Activated CD8-positive, alpha-beta T cell treated with anti-CD3 and anti-CD28 coated beads for 36 hours (primary cell): ENCODE measurements at regions of chr12 and their contacts with region 1.

Region 1: DNA sequence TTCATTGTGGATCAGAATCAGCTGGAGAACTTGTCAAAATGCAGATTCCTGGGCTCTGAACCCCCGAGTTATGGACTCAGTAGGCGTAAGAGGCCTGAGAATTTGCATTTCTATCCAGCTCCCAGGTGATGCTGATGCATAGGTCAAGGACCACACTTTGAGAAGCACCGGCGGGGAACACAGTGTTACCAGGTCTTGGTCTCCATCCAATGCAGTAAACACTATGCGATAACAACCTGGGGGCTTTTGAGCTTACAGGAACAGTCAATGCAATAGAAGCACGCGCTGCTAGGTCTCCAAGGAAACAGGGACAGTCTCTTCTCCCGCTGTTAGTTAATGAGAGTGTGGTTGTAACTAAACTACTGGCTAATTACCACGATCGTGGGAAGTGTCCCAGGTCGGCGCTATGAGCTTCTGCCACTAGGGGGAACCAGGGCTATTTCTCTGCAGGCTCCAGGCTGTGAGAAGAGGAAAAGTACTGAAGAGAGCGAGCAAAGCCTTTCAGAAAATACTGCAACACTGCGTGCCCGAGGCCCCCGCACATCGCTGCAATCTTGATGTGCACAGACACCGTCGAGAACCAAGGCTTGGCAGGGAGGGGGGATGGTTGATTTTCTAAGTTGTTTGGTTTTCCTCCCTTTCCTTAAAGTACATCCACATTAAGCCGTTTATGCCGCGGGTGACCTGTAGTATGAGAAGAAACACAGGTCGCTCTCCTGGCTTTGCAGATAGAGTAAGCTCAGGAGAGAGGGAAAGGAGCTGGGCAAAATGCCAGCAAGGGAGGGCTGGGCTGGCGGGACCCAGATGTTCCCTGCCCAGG is 52.0 kb upstream of the KCNA1 start:
- DNase-seq: peak; percentile 87
- ATAC-seq: peak; percentile 91
- H3K4me3 Mint-ChIP-seq: peak overlapping the region; percentile 28
- H3K27ac Mint-ChIP-seq: no peak overlapping the region
- H3K4me1 Mint-ChIP-seq: peaks cover 9% of the 10 kb centered on the region
- H3K27me3 Mint-ChIP-seq: peaks cover 11% of the 10 kb centered on the region
- CTCF ChIP-seq: peak; percentile 94

Region 2: GRCh38 chr12:4833524-4833923 is 24.2 kb before region 1 on chr12:
- CTCF ChIA-PET with region 1: interaction called, 33 read pairs
- POLR2A ChIA-PET with region 1: no interaction called
- intact Hi-C with region 1: no loop called
- DNase-seq: no peak
- ATAC-seq: no peak
- H3K4me3 Mint-ChIP-seq: no peak overlapping the region
- H3K27ac Mint-ChIP-seq: no peak overlapping the region
- H3K4me1 Mint-ChIP-seq: peaks cover 34% of the 10 kb centered on the region
- H3K27me3 Mint-ChIP-seq: peaks cover 4% of the 10 kb centered on the region
- CTCF ChIP-seq: no peak

Region 3: DNA sequence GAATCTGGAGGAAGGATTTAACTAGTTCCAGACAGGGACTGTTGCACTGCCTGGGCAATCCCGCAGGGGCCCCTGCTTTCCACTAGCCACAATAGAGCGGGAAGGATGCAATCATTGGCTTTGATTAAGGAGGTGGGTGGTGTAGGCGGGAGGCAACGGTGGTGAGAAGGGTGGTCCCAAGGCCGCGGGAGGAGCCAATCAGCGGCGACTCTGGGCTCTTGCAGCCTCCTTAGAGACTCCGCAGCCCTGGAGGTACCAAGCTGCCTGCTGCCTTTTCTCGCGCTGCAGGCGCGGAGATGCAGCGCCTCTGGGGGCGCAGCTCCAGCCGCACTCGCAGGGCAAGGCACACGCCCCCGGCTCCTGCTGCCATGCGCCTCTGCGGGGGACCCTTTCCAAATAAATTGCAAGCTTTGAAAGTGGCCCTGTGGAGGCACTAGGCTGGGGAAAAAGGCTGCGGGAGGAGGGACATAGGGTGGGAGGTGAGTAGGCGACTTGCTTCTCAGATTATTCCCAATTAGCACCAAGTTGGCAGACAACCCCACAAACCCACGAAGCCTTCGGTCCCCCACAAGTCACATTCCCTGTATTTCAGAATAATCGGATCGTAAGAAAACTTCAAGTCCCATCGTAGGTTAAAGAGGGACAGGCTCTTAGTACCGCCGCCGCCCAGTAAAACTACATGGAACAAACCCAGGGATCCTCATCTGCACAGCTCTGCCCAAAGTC is 51.2 kb after region 1 on chr12:
- CTCF ChIA-PET with region 1: interaction called, 40 read pairs
- POLR2A ChIA-PET with region 1: no interaction called
- intact Hi-C with region 1: no loop called
- DNase-seq: peak; percentile 39
- ATAC-seq: peak; percentile 65
- H3K4me3 Mint-ChIP-seq: peak overlapping the region; percentile 37
- H3K27ac Mint-ChIP-seq: no peak overlapping the region
- H3K4me1 Mint-ChIP-seq: peaks cover 16% of the 10 kb centered on the region
- H3K27me3 Mint-ChIP-seq: peaks cover 43% of the 10 kb centered on the region
- CTCF ChIP-seq: peak; percentile 25

Region 4: DNA sequence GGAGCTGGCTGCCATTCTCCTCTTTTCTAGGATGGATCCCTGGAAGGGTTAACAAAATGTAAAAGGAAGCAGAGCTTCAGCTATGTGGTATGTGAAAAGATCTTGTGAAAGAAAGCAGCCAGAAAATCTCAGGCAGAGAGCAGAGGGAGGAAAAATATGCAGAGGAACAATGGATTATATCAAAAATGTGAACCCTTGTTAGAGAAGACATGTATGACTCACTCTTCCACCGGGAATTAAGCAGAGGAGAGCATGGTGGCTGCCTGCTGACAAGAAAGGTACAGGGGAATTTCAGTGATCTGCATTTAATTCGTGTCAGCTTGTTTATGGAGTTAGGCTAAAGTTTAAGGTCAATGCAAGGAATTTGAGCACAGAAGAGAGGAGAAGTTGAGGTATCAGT is 98.4 kb after region 1 on chr12:
- CTCF ChIA-PET with region 1: interaction called, 12 read pairs
- POLR2A ChIA-PET with region 1: no interaction called
- intact Hi-C with region 1: no loop called
- DNase-seq: no peak
- ATAC-seq: no peak
- H3K4me3 Mint-ChIP-seq: no peak overlapping the region
- H3K27ac Mint-ChIP-seq: no peak overlapping the region
- H3K4me1 Mint-ChIP-seq: no peaks in the 10 kb centered on the region
- H3K27me3 Mint-ChIP-seq: peaks cover 20% of the 10 kb centered on the region
- CTCF ChIP-seq: no peak

Region 5: GRCh38 chr12:5003020-5003666 is 145.5 kb after region 1 on chr12:
- CTCF ChIA-PET with region 1: interaction called, 9 read pairs
- POLR2A ChIA-PET with region 1: no interaction called
- intact Hi-C with region 1: loop called (anchors 5 kb)
- DNase-seq: peak; percentile 65
- ATAC-seq: peak; percentile 82
- H3K4me3 Mint-ChIP-seq: no peak overlapping the region
- H3K27ac Mint-ChIP-seq: no peak overlapping the region
- H3K4me1 Mint-ChIP-seq: no peaks in the 10 kb centered on the region
- H3K27me3 Mint-ChIP-seq: peaks cover 12% of the 10 kb centered on the region
- CTCF ChIP-seq: peak; percentile 78

Region 6: GRCh38 chr12:5043589-5044419 is 186.1 kb after region 1 on chr12 and contains the start of gene KCNA5:
- CTCF ChIA-PET with region 1: no interaction called
- POLR2A ChIA-PET with region 1: no interaction called
- intact Hi-C with region 1: no loop called
- DNase-seq: no peak
- ATAC-seq: no peak
- H3K4me3 Mint-ChIP-seq: no peak within 1 kb of the TSS
- H3K27ac Mint-ChIP-seq: no peak within 1 kb of the TSS
- H3K4me1 Mint-ChIP-seq: no peaks in the 10 kb centered on the region
- H3K27me3 Mint-ChIP-seq: peaks cover 35% of the 10 kb centered on the region
- CTCF ChIP-seq: no peak
- total RNA-seq, gene KCNA5: not detected

Region 7: GRCh38 chr12:5083955-5084849 is 226.5 kb after region 1 on chr12:
- CTCF ChIA-PET with region 1: interaction called, 37 read pairs
- POLR2A ChIA-PET with region 1: no interaction called
- intact Hi-C with region 1: loop called (anchors 5 kb)
- DNase-seq: peak; percentile 39
- ATAC-seq: no peak
- H3K4me3 Mint-ChIP-seq: no peak overlapping the region
- H3K27ac Mint-ChIP-seq: no peak overlapping the region
- H3K4me1 Mint-ChIP-seq: no peaks in the 10 kb centered on the region
- H3K27me3 Mint-ChIP-seq: no peaks in the 10 kb centered on the region
- CTCF ChIP-seq: peak; percentile 64